ENCODE measurements at regions of chr11 and their contacts with region 1.

Region 1: GRCh38 chr11:11987503-11988022 is 20.9 kb downstream of the DKK3 start:
- DNase-seq: peak; percentile 78
- ATAC-seq: peak; percentile 46
- H3K4me3 ChIP-seq: no peak overlapping the region; the same call in 1 of the 2 replicates
- H3K27ac ChIP-seq: peak overlapping the region; percentile 57
- H3K4me1 ChIP-seq: peaks cover 42% of the 10 kb centered on the region
- H3K27me3 ChIP-seq: no peaks in the 10 kb centered on the region
- CTCF ChIP-seq: peak; percentile 52
- POLR2A ChIP-seq: no peak
- RAD21 ChIP-seq: peak; percentile 35

Region 2: GRCh38 chr11:11701070-11701469 is 286.5 kb before region 1 on chr11:
- CTCF ChIA-PET with region 1: no interaction called
- POLR2A ChIA-PET with region 1: no interaction called
- dilution Hi-C with region 1: no loop called
- in situ Hi-C with region 1: no loop called
- intact Hi-C with region 1: no loop called
- DNase-seq: peak; percentile 24
- ATAC-seq: peak; percentile 29; the same call in 1 of the 2 replicates
- H3K4me3 ChIP-seq: no peak overlapping the region
- H3K27ac ChIP-seq: no peak overlapping the region
- H3K4me1 ChIP-seq: no peaks in the 10 kb centered on the region
- H3K27me3 ChIP-seq: peaks cover 33% of the 10 kb centered on the region
- CTCF ChIP-seq: 0 out of 2 replicates have a peak, but pooled peaks have one; percentile 3
- POLR2A ChIP-seq: no peak
- RAD21 ChIP-seq: peak; percentile 19; the same call in 1 of the 2 replicates

Region 3: DNA sequence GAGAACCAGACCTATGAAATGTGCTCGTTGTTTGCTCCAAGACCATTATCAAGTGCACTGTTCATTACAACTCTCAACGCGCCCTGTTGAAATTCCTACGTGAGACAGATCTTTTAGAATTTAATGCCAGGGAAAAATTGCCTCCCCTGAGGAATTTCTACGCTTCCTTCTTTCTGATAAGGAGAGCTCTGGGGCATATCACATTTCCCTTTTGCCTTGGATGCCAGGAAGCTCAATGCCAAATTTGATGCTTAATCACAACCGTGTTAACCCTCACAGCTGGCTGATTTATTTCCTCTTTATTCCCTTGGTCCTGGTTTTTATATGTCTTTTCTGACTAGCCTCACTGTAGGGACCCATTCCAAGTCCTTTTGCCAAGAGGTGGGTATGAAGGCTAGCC is 232.2 kb after region 1 on chr11:
- CTCF ChIA-PET with region 1: no interaction called
- POLR2A ChIA-PET with region 1: interaction called, 10 read pairs
- dilution Hi-C with region 1: no loop called
- in situ Hi-C with region 1: no loop called
- intact Hi-C with region 1: no loop called
- DNase-seq: peak; percentile 37
- ATAC-seq: no peak
- H3K4me3 ChIP-seq: no peak overlapping the region
- H3K27ac ChIP-seq: no peak overlapping the region
- H3K4me1 ChIP-seq: peaks cover 31% of the 10 kb centered on the region
- H3K27me3 ChIP-seq: no peaks in the 10 kb centered on the region
- CTCF ChIP-seq: no peak
- POLR2A ChIP-seq: no peak
- RAD21 ChIP-seq: no peak